ENCODE measurements at regions of chr10 and their contacts with region 1.

Region 1: GRCh38 chr10:132516771-132517725 is 20.5 kb upstream of the INPP5A start:
- DNase-seq: peak; percentile 71
- H3K4me3 ChIP-seq: no peak overlapping the region
- H3K27ac ChIP-seq: peak overlapping the region; percentile 52
- H3K4me1 ChIP-seq: peaks cover 11% of the 10 kb centered on the region
- H3K27me3 ChIP-seq: no peaks in the 10 kb centered on the region
- CTCF ChIP-seq: no peak
- POLR2A ChIP-seq: no peak

Region 2: DNA sequence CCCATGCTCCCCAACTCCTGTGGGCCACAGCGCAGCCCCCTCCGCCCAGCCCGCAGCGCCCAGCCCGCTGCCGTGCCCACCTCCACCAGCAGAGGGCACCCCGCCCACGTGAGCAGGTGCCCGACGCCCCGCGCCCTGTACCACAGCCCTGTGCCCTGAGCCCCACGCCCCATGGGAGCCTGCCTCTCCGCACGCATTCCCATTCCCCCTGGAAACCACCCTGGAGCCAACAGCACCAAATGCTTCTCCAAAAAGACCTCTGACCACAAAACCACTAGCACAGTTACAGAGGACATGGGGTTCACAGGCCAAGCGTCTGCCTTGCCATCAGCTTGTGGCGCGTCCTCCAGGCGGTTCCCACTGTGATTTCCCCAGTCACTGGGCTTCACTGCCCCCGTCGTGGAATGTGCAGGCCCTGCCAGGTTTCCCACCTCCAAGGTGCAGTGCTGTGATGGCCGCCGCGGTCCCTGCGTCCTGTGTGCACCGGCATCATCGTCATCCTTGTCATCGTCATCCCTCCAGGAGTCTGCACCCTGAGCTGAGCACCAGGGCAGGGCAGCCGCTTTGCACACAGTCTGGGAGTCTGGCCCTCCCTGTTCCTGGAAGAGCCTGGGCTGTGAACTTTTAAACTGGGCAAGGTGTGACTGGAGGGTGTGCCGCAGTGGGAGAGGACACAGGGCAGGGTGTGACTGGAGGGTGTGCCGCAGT is 58.3 kb before region 1 on chr10:
- CTCF ChIA-PET with region 1: no interaction called
- POLR2A ChIA-PET with region 1: no interaction called
- dilution Hi-C with region 1: no loop called
- intact Hi-C with region 1: loop called (anchors 2 kb)
- DNase-seq: peak; percentile 21
- H3K4me3 ChIP-seq: no peak overlapping the region
- H3K27ac ChIP-seq: no peak overlapping the region
- H3K4me1 ChIP-seq: no peaks in the 10 kb centered on the region
- H3K27me3 ChIP-seq: no peaks in the 10 kb centered on the region
- CTCF ChIP-seq: peak; percentile 86 to 93
- POLR2A ChIP-seq: no peak

Region 3: DNA sequence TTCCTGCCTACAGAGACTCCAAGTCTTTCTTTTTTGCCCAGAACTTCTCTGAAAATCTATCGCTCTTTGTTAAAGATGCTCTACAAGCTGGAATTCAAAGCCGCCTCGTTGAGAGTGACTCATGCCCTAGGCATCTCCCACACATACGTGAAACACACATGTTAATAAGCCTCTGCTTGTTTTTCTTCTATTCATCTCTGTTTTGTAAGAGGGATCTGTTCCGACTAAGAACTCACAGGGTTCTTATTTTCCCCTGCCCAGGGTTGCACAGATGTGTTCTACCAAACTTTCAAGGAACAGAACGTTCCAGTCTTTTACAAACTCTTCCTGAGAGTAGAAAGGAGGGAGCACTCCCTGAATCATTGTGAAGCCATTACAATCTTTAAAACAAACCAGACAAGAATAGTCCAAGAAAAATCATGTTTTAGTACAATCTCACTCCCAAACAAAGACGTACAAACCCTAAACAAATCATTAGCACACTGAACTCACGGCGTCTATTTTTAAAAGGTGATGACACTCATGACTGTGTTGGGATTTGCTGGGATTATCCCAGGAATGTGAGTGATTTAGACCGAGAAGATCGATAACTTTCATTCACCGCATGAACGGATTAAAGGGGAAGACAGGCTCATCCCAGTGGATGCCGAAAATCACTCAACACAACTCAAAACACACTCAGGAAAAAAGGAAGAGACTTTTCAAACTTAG is 34.8 kb before region 1 on chr10:
- CTCF ChIA-PET with region 1: no interaction called
- POLR2A ChIA-PET with region 1: no interaction called
- dilution Hi-C with region 1: no loop called
- intact Hi-C with region 1: loop called (anchors 5 kb)
- DNase-seq: peak; percentile 17
- H3K4me3 ChIP-seq: no peak overlapping the region
- H3K27ac ChIP-seq: no peak overlapping the region
- H3K4me1 ChIP-seq: no peaks in the 10 kb centered on the region
- H3K27me3 ChIP-seq: peaks cover 2 to 7% of the 10 kb centered on the region in 2 experiments
- CTCF ChIP-seq: no peak
- POLR2A ChIP-seq: no peak

Region 4: DNA sequence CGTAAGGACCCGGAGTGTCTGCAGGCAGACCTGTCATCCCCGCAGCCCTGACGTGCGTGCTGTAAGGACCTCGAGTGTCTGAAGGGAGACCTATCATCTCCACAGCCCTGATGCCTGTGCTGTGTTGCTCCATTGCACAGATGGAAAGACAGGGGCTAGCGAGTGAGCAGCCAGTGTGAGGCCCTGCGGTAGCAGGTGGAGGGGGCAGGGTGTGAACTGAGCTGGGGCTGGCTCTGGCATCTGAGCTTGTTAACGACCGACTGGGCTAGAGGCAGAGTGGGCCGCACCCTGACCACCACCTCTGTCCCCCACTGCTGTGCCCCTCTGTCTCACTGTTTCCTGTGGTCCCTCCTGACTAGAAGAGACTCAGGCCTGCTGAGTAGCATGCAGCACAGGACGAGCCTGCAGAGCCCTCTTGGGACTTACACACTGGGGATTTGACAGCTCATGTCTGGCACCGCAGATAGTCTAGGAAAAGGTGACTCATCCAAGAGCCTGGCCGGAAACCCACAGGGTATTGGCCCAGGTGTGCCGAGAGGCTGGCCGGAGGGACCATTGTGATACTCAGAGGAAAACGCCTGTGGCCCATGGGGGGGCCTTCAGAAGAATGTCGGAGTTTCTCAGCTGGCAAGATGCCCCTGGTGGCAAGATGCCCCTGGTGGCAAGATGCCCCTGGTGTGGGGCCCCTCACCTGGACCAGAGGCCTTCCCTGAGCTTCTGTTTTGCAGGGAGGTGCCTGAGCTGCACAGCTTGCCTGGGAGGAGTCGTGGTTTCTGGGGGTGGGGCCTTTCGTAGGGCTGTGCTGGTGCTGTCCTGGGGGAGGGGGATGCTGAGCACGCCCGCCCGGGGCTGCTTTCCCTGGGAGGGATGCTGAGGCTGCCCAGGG is 54.8 kb after region 1 on chr10:
- CTCF ChIA-PET with region 1: no interaction called
- POLR2A ChIA-PET with region 1: no interaction called
- dilution Hi-C with region 1: no loop called
- intact Hi-C with region 1: loop called (anchors 1 kb)
- DNase-seq: peak; percentile 75
- H3K4me3 ChIP-seq: no peak overlapping the region
- H3K27ac ChIP-seq: no peak overlapping the region
- H3K4me1 ChIP-seq: peaks cover 27% of the 10 kb centered on the region
- H3K27me3 ChIP-seq: no peaks in the 10 kb centered on the region
- CTCF ChIP-seq: peak; percentile 4
- POLR2A ChIP-seq: no peak

Region 5: DNA sequence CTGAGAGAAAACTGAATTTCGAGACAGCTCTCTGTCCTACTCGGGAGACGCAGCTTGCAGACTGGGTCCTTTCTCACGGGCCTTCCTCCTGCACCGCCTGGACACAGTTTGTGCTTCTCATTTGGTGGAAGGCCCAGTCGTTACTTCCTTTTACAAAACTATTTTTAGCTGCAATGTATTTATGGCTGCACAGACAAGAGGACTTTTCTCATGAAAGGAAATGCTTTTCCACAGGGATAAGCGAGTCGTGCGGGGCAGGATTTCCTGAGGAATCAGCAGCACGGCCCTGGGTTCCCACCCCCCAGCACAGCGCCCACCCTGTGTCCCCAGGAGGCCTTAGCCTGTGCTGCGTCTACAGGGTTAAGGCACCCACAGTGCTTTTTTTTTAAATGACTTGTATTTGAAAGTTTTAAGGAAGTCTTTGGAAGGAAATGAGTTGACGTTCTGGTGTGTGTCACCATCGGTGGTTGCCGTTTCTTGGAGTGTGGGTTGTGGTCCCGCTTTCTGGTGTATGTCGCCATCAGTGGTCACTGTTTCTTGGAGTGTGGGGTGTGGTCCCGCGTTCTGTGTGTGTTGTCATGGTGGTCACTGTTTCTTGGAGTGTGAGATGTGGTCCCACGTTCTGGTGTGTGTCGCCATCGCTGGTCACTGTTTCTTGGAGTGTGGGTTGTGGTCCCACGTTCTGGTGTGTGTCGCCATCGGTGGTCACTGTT is 71.4 kb after region 1 on chr10:
- CTCF ChIA-PET with region 1: no interaction called
- POLR2A ChIA-PET with region 1: no interaction called
- dilution Hi-C with region 1: no loop called
- intact Hi-C with region 1: loop called (anchors 1 kb)
- DNase-seq: peak; percentile 92
- H3K4me3 ChIP-seq: peak overlapping the region in 1 of 3 experiments; percentile 14
- H3K27ac ChIP-seq: peak overlapping the region; percentile 31
- H3K4me1 ChIP-seq: peaks cover 39% of the 10 kb centered on the region
- H3K27me3 ChIP-seq: no peaks in the 10 kb centered on the region
- CTCF ChIP-seq: no peak
- POLR2A ChIP-seq: no peak

Region 6: DNA sequence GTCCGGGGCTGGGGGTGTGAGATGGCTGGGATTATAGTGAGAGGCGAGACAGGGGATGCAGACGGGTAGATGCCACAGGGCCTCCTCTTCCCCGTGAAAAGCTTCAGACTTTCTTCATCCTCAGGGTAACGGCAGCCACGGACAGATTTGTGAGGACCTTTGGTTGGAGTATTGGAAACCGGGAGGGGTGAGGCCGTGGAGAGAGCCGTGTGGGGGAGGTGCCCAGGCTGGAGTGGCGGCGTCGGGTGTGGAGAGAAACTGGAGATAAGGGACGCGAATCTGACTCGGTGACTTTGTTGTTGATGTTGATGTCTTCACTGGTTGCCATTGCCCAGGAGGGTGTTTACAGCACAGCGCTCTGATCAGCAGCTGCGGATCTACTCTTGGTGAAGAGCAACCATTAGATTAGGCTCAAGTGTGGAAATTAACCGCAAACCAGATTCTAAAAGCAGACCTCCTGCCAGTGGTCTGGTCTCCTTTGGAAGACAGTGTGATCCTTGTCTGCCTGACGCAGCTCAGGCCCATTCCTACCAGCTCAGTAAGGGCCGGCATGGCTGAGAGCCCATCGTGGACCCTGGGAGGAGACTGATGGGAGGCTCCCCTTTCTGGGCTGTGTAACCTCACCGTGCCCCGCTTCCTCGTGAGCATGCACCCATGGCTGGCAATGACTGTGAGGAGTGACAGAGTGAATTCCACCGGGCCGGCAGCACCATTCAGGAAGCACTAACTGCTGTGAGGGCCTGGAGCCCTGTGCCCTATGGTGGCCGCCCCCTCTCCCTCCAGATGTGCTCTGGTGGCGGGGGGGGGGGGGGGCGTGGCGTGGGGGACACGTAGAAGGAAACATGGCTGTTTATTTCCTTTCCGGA is 110.9 kb after region 1 on chr10:
- CTCF ChIA-PET with region 1: no interaction called
- POLR2A ChIA-PET with region 1: no interaction called
- dilution Hi-C with region 1: no loop called
- intact Hi-C with region 1: loop called (anchors 2 kb)
- DNase-seq: peak; percentile 35
- H3K4me3 ChIP-seq: no peak overlapping the region
- H3K27ac ChIP-seq: no peak overlapping the region
- H3K4me1 ChIP-seq: peaks cover 12% of the 10 kb centered on the region
- H3K27me3 ChIP-seq: no peaks in the 10 kb centered on the region
- CTCF ChIP-seq: no peak
- POLR2A ChIP-seq: no peak

Region 7: DNA sequence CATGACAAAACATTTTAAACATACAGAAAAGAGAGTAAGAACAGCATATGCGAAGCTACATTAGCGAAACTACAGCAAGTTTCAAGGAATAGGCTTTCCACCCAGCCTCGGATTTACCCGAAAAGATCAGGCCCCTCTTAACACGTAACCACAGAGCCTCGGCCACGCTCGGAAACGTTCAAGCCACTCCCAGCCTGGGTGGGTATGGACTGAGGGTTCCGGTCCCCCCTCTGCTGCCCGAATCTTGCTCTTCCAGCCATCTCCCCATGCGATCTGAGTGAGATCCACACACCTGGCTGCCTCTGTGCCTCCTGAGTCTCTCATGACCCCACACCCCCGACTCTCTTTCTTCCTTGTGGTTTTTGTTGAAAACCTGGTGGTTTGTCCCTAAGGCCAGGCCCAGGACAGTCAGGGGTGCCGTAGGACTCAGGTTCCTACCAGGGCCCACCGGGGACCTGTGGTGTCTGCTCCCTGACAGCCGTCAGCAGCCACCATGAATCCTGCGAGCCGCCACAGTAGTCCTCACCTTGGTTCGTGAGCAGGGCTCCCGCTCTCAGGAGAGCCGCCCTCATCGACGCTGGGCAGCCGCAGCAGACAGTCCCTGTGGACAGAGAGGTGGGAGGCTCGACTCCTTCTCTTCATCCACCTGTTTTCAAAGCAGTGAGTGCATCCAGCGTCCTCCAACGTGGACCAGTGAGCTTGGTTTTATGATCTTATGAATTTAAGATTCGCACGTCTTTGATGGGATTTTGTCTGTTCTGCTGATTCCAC is 661.5 kb after region 1 on chr10:
- CTCF ChIA-PET with region 1: no interaction called
- POLR2A ChIA-PET with region 1: no interaction called
- dilution Hi-C with region 1: no loop called
- intact Hi-C with region 1: no loop called
- DNase-seq: no peak
- H3K4me3 ChIP-seq: no peak overlapping the region
- H3K27ac ChIP-seq: no peak overlapping the region
- H3K4me1 ChIP-seq: no peaks in the 10 kb centered on the region
- H3K27me3 ChIP-seq: no peaks in the 10 kb centered on the region
- CTCF ChIP-seq: no peak
- POLR2A ChIP-seq: no peak